ENCODE measurements at regions of chr1 and their contacts with region 1.

Region 1: GRCh38 chr1:206725109-206725963 is 40.6 kb downstream of the MAPKAPK2 start:
- DNase-seq: no peak
- H3K4me3 ChIP-seq: no peak overlapping the region
- H3K27ac ChIP-seq: no peak overlapping the region
- H3K27me3 ChIP-seq: no peaks in the 10 kb centered on the region
- CTCF ChIP-seq: peak; percentile 75

Region 2: DNA sequence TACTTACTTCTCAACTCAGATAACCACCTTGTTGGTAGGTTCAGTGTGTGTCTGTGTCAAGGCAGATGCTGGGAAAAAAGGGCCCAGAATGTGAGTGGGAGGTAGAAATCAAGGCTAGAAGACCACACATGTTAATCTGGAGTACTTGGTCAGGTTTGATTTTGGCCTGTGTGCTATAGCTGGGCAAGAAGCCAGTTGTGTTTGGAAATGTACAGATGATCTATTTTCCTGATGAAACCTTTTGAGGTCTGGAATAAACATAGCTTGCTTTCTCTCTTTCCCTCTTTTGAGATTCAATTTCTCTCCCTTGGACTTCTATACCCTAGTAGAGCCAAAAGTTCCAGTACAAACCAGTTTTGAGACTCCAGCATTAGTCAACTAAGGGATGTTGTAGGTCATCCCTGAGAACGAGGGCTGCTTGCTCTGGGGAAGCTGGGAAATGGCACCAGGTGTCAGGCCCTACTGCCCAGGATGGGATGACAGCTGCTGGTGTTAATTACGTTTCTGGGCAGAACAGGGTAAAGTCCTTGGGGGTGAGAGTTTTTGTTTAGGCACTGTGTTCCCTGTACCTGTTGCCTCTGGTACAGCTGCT is 24.8 kb before region 1 on chr1:
- CTCF ChIA-PET with region 1: interaction called, 16 read pairs
- POLR2A ChIA-PET with region 1: no interaction called
- DNase-seq: peak; percentile 33
- H3K4me3 ChIP-seq: no peak overlapping the region
- H3K27ac ChIP-seq: peak overlapping the region; percentile 52
- H3K27me3 ChIP-seq: no peaks in the 10 kb centered on the region
- CTCF ChIP-seq: no peak

Region 3: DNA sequence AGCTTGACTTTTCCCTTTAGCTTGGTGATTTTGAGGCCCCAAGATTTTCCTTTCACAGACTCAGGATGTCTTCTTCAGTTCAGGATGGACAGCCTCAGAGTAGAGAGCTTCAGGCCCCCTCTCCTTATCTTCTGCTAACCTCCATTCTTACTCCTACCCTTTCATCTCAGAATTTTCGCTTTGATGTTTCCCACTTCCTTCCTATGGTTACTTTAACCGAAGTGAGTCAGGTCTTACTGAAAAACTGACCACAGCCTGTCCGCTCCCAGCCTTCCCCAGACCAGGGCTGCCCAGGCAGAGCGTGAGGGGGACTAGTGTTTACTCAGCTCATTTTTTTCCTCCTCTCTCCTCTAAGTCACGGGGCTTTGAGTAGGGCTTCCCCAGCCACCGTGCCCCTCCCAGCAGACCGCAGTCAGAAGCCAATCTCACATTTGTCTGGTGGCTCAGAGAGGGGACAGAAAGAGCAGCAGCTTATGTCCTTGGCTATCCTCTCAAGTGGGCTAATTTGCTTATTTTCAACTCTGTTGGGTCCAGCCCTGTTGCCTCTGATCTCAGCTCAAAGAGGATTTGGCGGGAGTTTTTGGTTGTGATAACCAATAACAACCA is 41.0 kb after region 1 on chr1:
- CTCF ChIA-PET with region 1: interaction called, 18 read pairs
- POLR2A ChIA-PET with region 1: no interaction called
- DNase-seq: peak; percentile 74
- H3K4me3 ChIP-seq: no peak overlapping the region
- H3K27ac ChIP-seq: no peak overlapping the region
- H3K27me3 ChIP-seq: no peaks in the 10 kb centered on the region
- CTCF ChIP-seq: no peak

Region 4: GRCh38 chr1:206865013-206865671 is 139.8 kb after region 1 on chr1 and contains the start of gene IL20:
- CTCF ChIA-PET with region 1: interaction called, 11 read pairs
- POLR2A ChIA-PET with region 1: no interaction called
- DNase-seq: peak; percentile 50
- H3K4me3 ChIP-seq: no peak within 1 kb of the TSS
- H3K27ac ChIP-seq: no peak within 1 kb of the TSS
- H3K27me3 ChIP-seq: no peaks in the 10 kb centered on the region
- CTCF ChIP-seq: peak; percentile 90
- polyA plus RNA-seq, gene IL20: not detected in 2 replicates